GM12878 (cell line): ENCODE measurements at regions of chr5 and their contacts with region 1.

Region 1: DNA sequence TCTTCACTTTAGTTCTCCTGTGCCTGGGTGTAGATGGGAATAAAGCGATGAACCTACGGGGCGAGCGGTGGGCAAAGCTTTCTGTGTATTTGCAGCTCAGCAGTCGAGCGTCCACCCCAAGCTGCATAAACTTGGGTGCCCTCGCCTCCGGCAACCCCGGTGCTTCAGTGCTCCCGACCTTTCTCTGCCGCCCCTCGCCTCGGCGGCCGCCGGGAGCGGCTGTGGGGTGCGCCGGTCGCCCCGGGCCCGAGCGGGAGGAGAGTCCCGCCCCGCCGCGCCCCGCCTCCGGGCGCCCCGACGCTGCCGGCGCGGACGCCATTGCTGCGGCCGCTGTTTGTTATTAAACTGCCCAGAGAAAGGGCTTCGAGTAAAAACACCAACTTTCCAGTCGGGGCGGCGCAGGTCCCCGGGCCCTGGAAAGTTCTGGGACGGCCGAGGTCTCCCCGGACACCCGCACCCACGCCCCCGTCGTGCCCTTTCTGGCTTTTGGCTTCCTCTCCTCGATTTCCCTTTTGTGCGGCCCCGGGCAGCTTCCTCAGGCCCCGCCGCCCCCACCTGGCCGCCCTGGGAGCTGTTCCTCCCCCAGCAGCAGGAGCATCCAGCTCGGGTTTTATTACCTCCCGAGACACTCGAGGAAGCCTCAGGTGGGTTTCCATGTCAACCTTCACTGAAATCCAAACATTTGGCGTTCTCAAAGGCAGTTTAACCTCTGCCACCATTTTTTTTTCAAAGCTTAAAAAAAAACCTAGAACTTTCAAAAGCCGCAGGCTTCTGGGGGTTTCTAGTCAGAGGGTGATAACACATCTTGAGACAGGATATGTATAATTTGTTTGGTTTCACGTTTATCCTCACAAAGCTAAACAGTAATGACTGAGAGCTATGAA is 334.3 kb downstream of the CWC27 start:
- DNase-seq: no peak
- ATAC-seq: peak; percentile 88
- H3K4me3 ChIP-seq: peak overlapping the region; percentile 86
- H3K27ac ChIP-seq: peak overlapping the region; percentile 76
- H3K4me1 ChIP-seq: peaks cover 28% of the 10 kb centered on the region
- H3K27me3 ChIP-seq: no peaks in the 10 kb centered on the region
- CTCF ChIP-seq: peak in 2 of 3 experiments; percentile 33 to 44; a peak in 3 of 6 replicates
- EP300 ChIP-seq: no peak
- POLR2A ChIP-seq: peak; percentile 75
- RAD21 ChIP-seq: peak; percentile 33; the same call in 1 of the 2 replicates

Region 2: GRCh38 chr5:64811050-64811640 is 291.9 kb before region 1 on chr5:
- CTCF ChIA-PET with region 1: interaction called, 17 read pairs
- POLR2A ChIA-PET with region 1: no interaction called
- RAD21 ChIA-PET with region 1: interaction called, 13 read pairs
- SMC1A ChIA-PET with region 1: interaction called, 9 read pairs
- in situ Hi-C with region 1: no loop called
- intact Hi-C with region 1: loop called (anchors 10 kb)
- DNase-seq: peak; percentile 5
- ATAC-seq: peak; percentile 69
- H3K4me3 ChIP-seq: no peak overlapping the region
- H3K27ac ChIP-seq: no peak overlapping the region
- H3K4me1 ChIP-seq: peaks cover 12% of the 10 kb centered on the region
- H3K27me3 ChIP-seq: no peaks in the 10 kb centered on the region
- CTCF ChIP-seq: peak; percentile 54 to 72 (median 56); a peak in 5 of 6 replicates
- EP300 ChIP-seq: no peak
- POLR2A ChIP-seq: no peak
- RAD21 ChIP-seq: peak; percentile 92

Region 3: GRCh38 chr5:64965613-64966012 is 137.5 kb before region 1 on chr5:
- CTCF ChIA-PET with region 1: interaction called, 9 read pairs
- POLR2A ChIA-PET with region 1: interaction called, 6 read pairs
- RAD21 ChIA-PET with region 1: interaction called, 32 read pairs
- SMC1A ChIA-PET with region 1: interaction called, 23 read pairs
- in situ Hi-C with region 1: no loop called
- intact Hi-C with region 1: no loop called
- DNase-seq: no peak
- ATAC-seq: no peak
- H3K4me3 ChIP-seq: no peak overlapping the region
- H3K27ac ChIP-seq: no peak overlapping the region
- H3K4me1 ChIP-seq: no peaks in the 10 kb centered on the region
- H3K27me3 ChIP-seq: no peaks in the 10 kb centered on the region
- CTCF ChIP-seq: no peak
- EP300 ChIP-seq: no peak
- POLR2A ChIP-seq: no peak
- RAD21 ChIP-seq: no peak

Region 4: DNA sequence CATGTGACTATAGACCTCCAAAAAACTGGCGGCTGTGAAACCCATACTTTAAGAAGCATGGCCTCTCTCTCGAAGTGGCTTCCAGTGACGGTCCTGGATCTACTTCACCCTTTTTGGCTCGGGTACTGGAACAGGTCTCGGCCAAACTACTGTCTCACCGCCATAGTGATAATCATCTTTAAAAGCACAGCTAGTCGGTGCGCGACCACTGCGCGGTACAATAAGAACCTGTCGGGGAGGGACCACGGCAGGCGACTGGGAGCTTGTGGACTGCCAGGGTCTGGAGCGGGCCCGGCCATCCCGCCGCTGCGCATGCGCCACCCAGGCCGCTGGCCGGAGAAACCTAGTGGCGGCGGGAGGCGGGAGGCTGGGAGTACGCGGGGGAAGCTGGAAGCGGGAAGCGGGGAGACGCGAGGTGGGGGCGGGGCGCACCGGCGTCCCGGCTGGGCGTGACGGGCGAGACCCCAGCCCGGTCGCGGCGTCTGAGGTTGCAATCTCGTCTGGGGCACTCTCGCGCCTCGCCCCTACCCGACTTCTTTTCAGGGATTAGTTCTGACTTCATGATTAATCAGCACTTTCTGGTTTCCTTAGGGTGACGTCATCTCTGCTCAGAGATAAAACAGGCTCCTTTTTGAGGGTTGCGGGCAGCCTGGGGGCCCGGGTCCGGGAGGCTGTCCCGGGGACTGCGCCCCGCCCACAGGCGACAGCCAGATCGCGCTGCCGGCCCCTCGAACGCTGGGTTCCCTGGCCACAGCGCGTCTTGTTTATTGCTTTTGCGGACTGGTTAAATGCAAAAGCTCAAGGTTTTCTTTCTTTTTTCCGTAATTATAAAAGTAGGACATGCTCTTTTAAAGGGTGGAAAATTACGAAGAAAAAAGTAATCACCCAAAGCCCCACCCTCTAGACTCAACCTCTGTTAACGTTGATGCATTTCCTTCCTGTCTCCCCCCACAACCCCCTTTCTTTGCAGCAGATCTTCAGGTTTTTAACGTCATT is 67.6 kb before region 1 on chr5:
- CTCF ChIA-PET with region 1: interaction called, 5 read pairs
- POLR2A ChIA-PET with region 1: no interaction called
- RAD21 ChIA-PET with region 1: interaction called, 5 read pairs
- SMC1A ChIA-PET with region 1: interaction called, 4 read pairs
- in situ Hi-C with region 1: no loop called
- intact Hi-C with region 1: loop called (anchors 5 kb)
- DNase-seq: peak; percentile 40
- ATAC-seq: peak; percentile 89
- H3K4me3 ChIP-seq: peak overlapping the region; percentile 70
- H3K27ac ChIP-seq: peak overlapping the region; percentile 90
- H3K4me1 ChIP-seq: peaks cover 15% of the 10 kb centered on the region
- H3K27me3 ChIP-seq: no peaks in the 10 kb centered on the region
- CTCF ChIP-seq: no peak
- EP300 ChIP-seq: peak in 1 of 2 experiments; percentile 42; a peak in 1 of 4 replicates
- POLR2A ChIP-seq: peak; percentile 79
- RAD21 ChIP-seq: 0 out of 2 replicates have a peak, but pooled peaks have one; percentile 1

Region 5: GRCh38 chr5:65066385-65067146 is 36.5 kb before region 1 on chr5:
- CTCF ChIA-PET with region 1: interaction called, 8 read pairs
- POLR2A ChIA-PET with region 1: interaction called, 9 read pairs
- RAD21 ChIA-PET with region 1: interaction called, 30 read pairs
- SMC1A ChIA-PET with region 1: interaction called, 62 read pairs
- in situ Hi-C with region 1: no loop called
- intact Hi-C with region 1: no loop called
- DNase-seq: peak; percentile 92
- ATAC-seq: peak; percentile 77
- H3K4me3 ChIP-seq: no peak overlapping the region
- H3K27ac ChIP-seq: peak overlapping the region; percentile 77
- H3K4me1 ChIP-seq: peaks cover 64% of the 10 kb centered on the region
- H3K27me3 ChIP-seq: no peaks in the 10 kb centered on the region
- CTCF ChIP-seq: no peak
- EP300 ChIP-seq: peak; percentile 78 to 92
- POLR2A ChIP-seq: no peak
- RAD21 ChIP-seq: no peak

Region 6: GRCh38 chr5:65120371-65120967 is 17.4 kb after region 1 on chr5:
- CTCF ChIA-PET with region 1: interaction called, 4 read pairs
- POLR2A ChIA-PET with region 1: interaction called, 6 read pairs
- RAD21 ChIA-PET with region 1: interaction called, 9 read pairs
- SMC1A ChIA-PET with region 1: interaction called, 12 read pairs
- in situ Hi-C with region 1: no loop called
- intact Hi-C with region 1: no loop called
- DNase-seq: no peak
- ATAC-seq: no peak
- H3K4me3 ChIP-seq: no peak overlapping the region
- H3K27ac ChIP-seq: no peak overlapping the region
- H3K4me1 ChIP-seq: no peaks in the 10 kb centered on the region
- H3K27me3 ChIP-seq: no peaks in the 10 kb centered on the region
- CTCF ChIP-seq: no peak
- EP300 ChIP-seq: no peak
- POLR2A ChIP-seq: no peak
- RAD21 ChIP-seq: no peak